GM12878 (cell line): ENCODE measurements at regions of chr3 and their contacts with region 1.

Region 1: GRCh38 chr3:182713743-182714517 is 79.4 kb upstream of the ATP11B start:
- DNase-seq: peak; percentile 49
- ATAC-seq: peak; percentile 48
- H3K4me3 ChIP-seq: no peak overlapping the region
- H3K27ac ChIP-seq: no peak overlapping the region; the same call in 1 of the 2 replicates
- H3K4me1 ChIP-seq: peaks cover 35% of the 10 kb centered on the region
- H3K27me3 ChIP-seq: no peaks in the 10 kb centered on the region
- CTCF ChIP-seq: peak; percentile 51 to 81 (median 64); a peak in 5 of 6 replicates
- EP300 ChIP-seq: no peak
- POLR2A ChIP-seq: no peak
- RAD21 ChIP-seq: peak; percentile 89

Region 2: GRCh38 chr3:182735672-182736071 is 21.7 kb after region 1 on chr3:
- CTCF ChIA-PET with region 1: interaction called, 109 read pairs
- POLR2A ChIA-PET with region 1: interaction called, 27 read pairs
- RAD21 ChIA-PET with region 1: interaction called, 104 read pairs
- SMC1A ChIA-PET with region 1: interaction called, 109 read pairs
- in situ Hi-C with region 1: no loop called
- intact Hi-C with region 1: loop called (anchors 1 kb)
- DNase-seq: no peak
- ATAC-seq: no peak
- H3K4me3 ChIP-seq: no peak overlapping the region
- H3K27ac ChIP-seq: no peak overlapping the region
- H3K4me1 ChIP-seq: peaks cover 5% of the 10 kb centered on the region
- H3K27me3 ChIP-seq: no peaks in the 10 kb centered on the region
- CTCF ChIP-seq: no peak
- EP300 ChIP-seq: no peak
- POLR2A ChIP-seq: no peak
- RAD21 ChIP-seq: no peak

Region 3: GRCh38 chr3:182814419-182815062 is 100.6 kb after region 1 on chr3:
- CTCF ChIA-PET with region 1: interaction called, 9 read pairs
- POLR2A ChIA-PET with region 1: no interaction called
- RAD21 ChIA-PET with region 1: interaction called, 7 read pairs
- SMC1A ChIA-PET with region 1: interaction called, 11 read pairs
- in situ Hi-C with region 1: no loop called
- intact Hi-C with region 1: no loop called
- DNase-seq: no peak
- ATAC-seq: no peak
- H3K4me3 ChIP-seq: no peak overlapping the region
- H3K27ac ChIP-seq: no peak overlapping the region
- H3K4me1 ChIP-seq: no peaks in the 10 kb centered on the region
- H3K27me3 ChIP-seq: no peaks in the 10 kb centered on the region
- CTCF ChIP-seq: no peak
- EP300 ChIP-seq: no peak
- POLR2A ChIP-seq: no peak
- RAD21 ChIP-seq: no peak

Region 4: DNA sequence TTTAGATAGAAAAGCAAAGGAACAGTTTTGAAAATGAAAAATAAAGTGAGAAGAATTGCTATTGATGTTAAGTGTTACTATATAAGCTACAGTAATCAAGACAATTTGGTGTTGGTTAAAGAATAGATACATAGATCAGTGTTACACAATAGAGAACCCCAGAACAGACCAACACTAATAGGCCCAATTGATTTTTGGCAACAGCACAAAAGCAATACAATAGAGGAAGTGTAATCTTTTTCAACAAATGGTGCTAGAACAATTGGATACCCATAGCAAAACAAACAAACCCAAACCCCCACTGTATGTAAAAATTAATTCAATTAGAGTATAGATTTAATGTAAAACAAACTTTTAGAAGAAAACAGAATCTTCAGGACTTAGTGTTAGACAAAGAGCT is 141.1 kb after region 1 on chr3:
- CTCF ChIA-PET with region 1: interaction called, 93 read pairs
- POLR2A ChIA-PET with region 1: interaction called, 3 read pairs
- RAD21 ChIA-PET with region 1: interaction called, 10 read pairs
- SMC1A ChIA-PET with region 1: interaction called, 24 read pairs
- in situ Hi-C with region 1: no loop called
- intact Hi-C with region 1: no loop called
- DNase-seq: no peak
- ATAC-seq: no peak
- H3K4me3 ChIP-seq: no peak overlapping the region
- H3K27ac ChIP-seq: no peak overlapping the region
- H3K4me1 ChIP-seq: no peaks in the 10 kb centered on the region
- H3K27me3 ChIP-seq: no peaks in the 10 kb centered on the region
- CTCF ChIP-seq: no peak
- EP300 ChIP-seq: no peak
- POLR2A ChIP-seq: no peak
- RAD21 ChIP-seq: no peak

Region 5: DNA sequence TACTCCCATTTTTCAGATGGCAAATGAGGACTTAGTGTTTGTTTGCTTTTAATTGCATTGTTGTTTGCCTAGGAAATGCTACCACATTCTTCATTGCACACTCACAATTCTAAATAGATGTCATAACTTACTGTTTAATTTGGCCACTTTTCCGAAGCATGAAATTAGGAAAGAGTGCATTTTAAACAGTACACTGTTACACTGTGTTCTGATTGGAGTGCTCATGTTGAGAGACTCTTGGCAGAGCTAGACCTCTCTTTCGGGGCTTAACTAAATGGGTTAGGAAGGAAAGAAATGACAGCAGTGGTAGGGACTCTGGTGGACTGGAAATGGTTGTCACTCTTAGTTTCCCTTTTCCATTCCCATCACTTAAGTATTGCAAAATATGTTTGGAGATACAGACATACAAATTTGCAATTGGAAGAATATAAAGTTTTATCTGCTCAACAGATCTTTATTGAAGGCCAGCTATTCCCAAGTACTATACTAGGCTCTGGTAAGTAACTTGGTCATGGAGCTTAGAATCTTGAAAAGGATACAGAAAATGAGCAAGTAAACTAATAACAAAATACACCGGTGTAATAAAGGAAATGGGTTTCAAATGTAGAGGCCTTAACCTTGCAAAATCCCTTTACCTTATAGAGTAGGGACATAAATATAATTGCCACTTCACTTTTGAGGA is 176.2 kb after region 1 on chr3:
- CTCF ChIA-PET with region 1: interaction called, 5 read pairs
- POLR2A ChIA-PET with region 1: no interaction called
- RAD21 ChIA-PET with region 1: interaction called, 13 read pairs
- SMC1A ChIA-PET with region 1: interaction called, 21 read pairs
- in situ Hi-C with region 1: no loop called
- intact Hi-C with region 1: no loop called
- DNase-seq: no peak
- ATAC-seq: no peak
- H3K4me3 ChIP-seq: no peak overlapping the region
- H3K27ac ChIP-seq: no peak overlapping the region
- H3K4me1 ChIP-seq: no peaks in the 10 kb centered on the region
- H3K27me3 ChIP-seq: no peaks in the 10 kb centered on the region
- CTCF ChIP-seq: no peak
- EP300 ChIP-seq: no peak
- POLR2A ChIP-seq: no peak
- RAD21 ChIP-seq: no peak

Region 6: DNA sequence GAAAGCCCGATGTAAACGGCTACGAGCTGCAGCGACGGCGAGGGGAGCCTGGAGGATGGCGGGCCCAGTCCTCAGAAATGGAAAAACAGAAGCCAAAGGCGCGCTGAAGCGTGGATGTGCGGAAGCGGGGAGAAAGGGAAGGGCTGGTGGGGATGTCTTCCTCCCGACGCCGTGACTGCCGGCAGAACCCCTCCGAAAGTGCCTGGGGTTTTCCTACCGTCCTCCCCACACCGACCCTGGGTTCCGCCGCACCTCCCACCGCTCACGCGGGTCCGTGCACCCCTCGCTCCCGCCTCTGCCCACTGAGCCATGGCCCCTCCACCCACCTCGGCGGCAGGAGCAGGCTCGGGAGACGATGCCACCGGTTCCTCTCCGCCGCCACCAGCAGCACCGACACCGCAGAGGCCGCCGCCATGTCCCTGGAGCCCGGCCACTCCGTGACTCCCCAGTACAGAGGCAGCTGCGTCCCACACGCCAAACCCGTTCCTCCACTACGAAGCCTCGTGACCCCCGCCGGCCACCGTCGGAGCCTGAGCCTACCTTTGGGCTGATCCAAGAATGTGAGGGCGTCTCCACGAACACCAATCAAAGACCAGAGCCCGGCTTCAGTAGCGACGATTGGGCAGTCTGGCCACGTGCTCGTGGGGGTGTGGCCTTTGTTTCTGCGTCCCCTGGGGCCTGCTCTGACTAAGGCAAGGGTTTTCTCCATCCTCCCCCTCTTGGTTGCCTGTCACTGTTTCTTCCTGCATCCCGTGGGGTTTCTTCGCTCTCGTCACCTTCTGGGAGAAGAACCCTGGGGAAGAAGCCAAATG is 385.3 kb after region 1 on chr3 and contains the start of gene MCCC1:
- CTCF ChIA-PET with region 1: interaction called, 10 read pairs
- POLR2A ChIA-PET with region 1: interaction called, 3 read pairs
- RAD21 ChIA-PET with region 1: interaction called, 6 read pairs
- SMC1A ChIA-PET with region 1: interaction called, 8 read pairs
- in situ Hi-C with region 1: no loop called
- intact Hi-C with region 1: loop called (anchors 5 kb)
- DNase-seq: peak; percentile 94
- ATAC-seq: peak; percentile 98
- H3K4me3 ChIP-seq: peak within 1 kb of the TSS; percentile 93
- H3K27ac ChIP-seq: peak within 1 kb of the TSS; percentile 92
- H3K4me1 ChIP-seq: peaks cover 4% of the 10 kb centered on the region
- H3K27me3 ChIP-seq: no peaks in the 10 kb centered on the region
- CTCF ChIP-seq: no peak; a peak in 1 of 6 replicates
- EP300 ChIP-seq: peak in 1 of 2 experiments; percentile 44; a peak in 1 of 4 replicates
- POLR2A ChIP-seq: peak; percentile 94
- RAD21 ChIP-seq: no peak
- polyA plus RNA-seq, gene MCCC1: 35.0 to 38.7 TPM

Region 7: DNA sequence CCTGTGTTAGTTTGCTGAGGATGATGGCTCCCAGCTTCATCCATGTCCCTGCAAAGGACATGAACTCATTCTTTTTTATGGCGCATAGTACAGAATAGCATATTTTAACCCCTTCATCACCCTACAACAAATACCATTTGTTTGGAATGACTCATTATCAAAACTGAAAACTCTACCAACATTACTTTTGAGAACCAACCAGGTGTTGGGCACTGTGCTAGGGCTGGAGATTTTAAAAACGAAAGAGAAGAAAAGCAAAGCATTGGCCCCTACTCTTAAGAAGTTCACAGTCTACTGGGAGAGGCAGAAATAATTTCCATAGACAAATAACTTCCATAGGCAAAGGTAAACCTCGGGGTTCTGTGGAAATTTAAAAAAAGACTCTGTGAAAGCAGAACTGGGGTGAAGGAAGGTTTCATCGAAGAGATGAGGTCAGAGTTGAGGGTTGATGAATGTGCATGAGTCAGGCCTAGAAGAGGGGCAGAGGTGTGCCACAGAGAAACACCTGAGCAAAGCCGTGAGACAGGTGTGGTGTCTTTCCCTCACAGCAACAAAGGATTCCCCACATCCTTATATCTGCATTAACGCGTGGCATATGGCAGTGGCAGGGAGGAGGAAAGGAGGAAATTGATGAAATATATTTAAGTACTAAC is 663.5 kb after region 1 on chr3:
- CTCF ChIA-PET with region 1: interaction called, 66 read pairs
- POLR2A ChIA-PET with region 1: no interaction called
- RAD21 ChIA-PET with region 1: interaction called, 62 read pairs
- SMC1A ChIA-PET with region 1: interaction called, 20 read pairs
- in situ Hi-C with region 1: no loop called
- intact Hi-C with region 1: loop called (anchors 2 kb)
- DNase-seq: no peak
- ATAC-seq: peak; percentile 46
- H3K4me3 ChIP-seq: no peak overlapping the region
- H3K27ac ChIP-seq: no peak overlapping the region
- H3K4me1 ChIP-seq: peaks cover 11% of the 10 kb centered on the region; the same call in 1 of the 2 replicates
- H3K27me3 ChIP-seq: no peaks in the 10 kb centered on the region
- CTCF ChIP-seq: no peak
- EP300 ChIP-seq: no peak
- POLR2A ChIP-seq: no peak
- RAD21 ChIP-seq: no peak